Panc1 (cell line): ENCODE measurements at regions of chr4 and their contacts with region 1.

Region 1: DNA sequence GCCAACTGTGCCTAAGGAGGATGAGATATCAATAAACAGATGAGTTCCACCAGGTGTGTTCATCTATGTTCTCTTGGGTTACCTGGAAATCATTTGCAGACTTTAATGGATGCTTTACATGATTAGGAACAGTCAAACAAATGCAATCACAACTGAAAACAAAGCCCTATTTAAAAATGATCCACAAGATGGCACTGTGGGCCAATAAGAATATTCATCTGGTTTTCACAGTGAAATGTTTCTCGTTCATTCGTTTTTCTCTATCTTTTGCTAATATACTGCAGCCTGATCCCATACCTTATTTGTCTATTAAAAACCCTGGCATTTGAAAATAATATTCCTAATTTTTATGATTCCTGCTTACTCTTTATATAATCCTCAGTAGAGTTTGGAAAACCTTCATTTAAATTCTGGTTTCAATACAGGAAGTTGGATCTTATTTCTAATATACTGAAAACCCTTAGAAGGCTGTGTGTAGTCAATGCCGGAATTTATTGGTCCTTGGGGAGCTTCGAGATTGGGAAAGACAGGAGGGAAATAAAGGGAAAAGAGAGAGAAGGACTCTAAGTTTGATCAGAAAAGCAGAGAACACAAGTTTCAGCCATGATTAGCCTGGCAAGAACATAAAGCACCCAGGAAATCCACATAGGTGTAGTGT is 63.8 kb upstream of the TAPT1 start:
- DNase-seq: peak; percentile 8
- ATAC-seq: no peak
- H3K4me3 ChIP-seq: no peak overlapping the region
- H3K27ac ChIP-seq: no peak overlapping the region
- H3K4me1 ChIP-seq: no peaks in the 10 kb centered on the region
- H3K27me3 ChIP-seq: no peaks in the 10 kb centered on the region
- CTCF ChIP-seq: peak; percentile 62; the same call in 1 of the 2 replicates

Region 2: GRCh38 chr4:16450724-16451123 is 160.7 kb after region 1 on chr4:
- CTCF ChIA-PET with region 1: no interaction called
- POLR2A ChIA-PET with region 1: no interaction called
- in situ Hi-C with region 1: no loop called
- intact Hi-C with region 1: loop called (anchors 5 kb)
- DNase-seq: no peak
- ATAC-seq: no peak
- H3K4me3 ChIP-seq: no peak overlapping the region
- H3K27ac ChIP-seq: no peak overlapping the region
- H3K4me1 ChIP-seq: no peaks in the 10 kb centered on the region
- H3K27me3 ChIP-seq: no peaks in the 10 kb centered on the region
- CTCF ChIP-seq: no peak

Region 3: GRCh38 chr4:17447675-17448298 is 1157.8 kb after region 1 on chr4:
- CTCF ChIA-PET with region 1: no interaction called
- POLR2A ChIA-PET with region 1: no interaction called
- in situ Hi-C with region 1: no loop called
- intact Hi-C with region 1: loop called (anchors 5 kb)
- DNase-seq: peak; percentile 50
- ATAC-seq: peak; percentile 84
- H3K4me3 ChIP-seq: no peak overlapping the region
- H3K27ac ChIP-seq: no peak overlapping the region
- H3K4me1 ChIP-seq: no peaks in the 10 kb centered on the region
- H3K27me3 ChIP-seq: no peaks in the 10 kb centered on the region
- CTCF ChIP-seq: peak; percentile 70